ENCODE measurements at regions of chr16 and their contacts with region 1.

Region 1: GRCh38 chr16:77171745-77172635 is 19.0 kb upstream of the MON1B start:
- DNase-seq: peak; percentile 10
- H3K4me3 ChIP-seq: no peak overlapping the region
- CTCF ChIP-seq: peak; percentile 53

Region 2: DNA sequence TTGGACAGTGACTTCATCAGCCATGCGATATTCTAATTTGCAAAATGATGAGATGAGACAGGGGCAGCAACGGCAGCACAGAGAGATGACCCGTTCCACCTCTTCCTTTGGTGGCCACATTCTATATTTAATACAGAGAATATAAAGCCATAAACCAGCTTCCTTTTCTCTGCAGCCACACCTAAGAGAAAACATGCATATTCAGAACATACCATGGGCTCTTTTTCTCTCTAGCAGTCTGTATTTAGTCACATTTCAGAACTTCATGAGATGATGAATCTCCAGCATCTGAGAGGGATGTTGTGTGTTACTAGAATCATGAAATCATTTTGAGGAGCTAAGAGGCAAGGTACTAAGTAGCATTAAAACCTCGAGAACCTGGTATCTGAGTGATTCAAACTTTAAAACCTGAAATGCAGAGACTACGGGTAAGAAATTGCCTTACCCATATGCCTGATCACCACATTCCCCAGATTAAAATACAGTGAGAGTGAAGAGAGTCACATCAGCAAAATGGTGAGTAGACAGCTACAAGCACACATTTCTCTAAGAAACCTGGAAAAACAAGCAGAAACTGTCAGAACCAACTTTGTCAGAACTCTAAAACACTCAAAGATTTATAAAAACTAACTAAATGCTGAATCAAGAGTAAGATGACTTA is 1390.2 kb before region 1 on chr16:
- CTCF ChIA-PET with region 1: interaction called, 67 read pairs
- POLR2A ChIA-PET with region 1: no interaction called
- DNase-seq: no peak
- H3K4me3 ChIP-seq: no peak overlapping the region
- CTCF ChIP-seq: no peak

Region 3: DNA sequence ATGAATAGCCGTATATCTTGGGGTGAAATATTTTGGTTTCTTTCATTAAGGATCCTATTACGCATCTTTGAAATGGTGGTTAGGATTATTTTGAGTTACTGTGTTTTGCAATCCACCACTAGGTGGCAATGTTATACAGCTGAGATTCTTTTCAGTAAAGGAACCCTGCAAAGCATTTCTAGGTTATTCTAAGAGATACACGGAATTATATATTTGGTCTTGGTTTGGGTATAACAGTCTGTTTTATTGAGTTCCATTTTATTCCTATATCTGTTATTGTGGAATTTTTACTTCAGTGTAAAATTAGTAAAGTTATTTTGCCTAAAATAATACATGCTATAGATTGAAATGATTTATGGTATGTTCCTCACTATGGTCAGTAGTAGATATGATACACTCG is 1382.8 kb before region 1 on chr16:
- CTCF ChIA-PET with region 1: interaction called, 67 read pairs
- POLR2A ChIA-PET with region 1: no interaction called
- DNase-seq: peak; percentile 2
- H3K4me3 ChIP-seq: no peak overlapping the region
- CTCF ChIP-seq: peak; percentile 39

Region 4: DNA sequence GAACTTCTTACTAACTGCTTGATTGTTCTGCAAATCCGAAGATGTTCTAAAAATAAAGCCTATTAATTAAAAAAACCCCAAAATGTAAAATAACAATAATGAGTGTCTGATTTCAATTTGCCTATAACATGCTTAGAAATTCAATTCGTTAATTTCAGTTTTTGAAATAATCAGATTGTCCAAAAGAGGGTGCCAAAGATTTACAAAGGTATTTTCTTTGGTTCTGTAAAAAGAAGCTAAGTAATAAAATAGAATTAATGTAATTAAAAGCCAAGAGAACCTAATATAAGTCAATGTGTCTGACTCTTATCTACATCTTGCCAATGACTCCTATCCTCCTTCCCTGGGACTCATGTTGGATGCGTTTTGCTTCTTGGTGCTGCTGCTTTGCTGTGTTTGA is 1370.7 kb before region 1 on chr16:
- CTCF ChIA-PET with region 1: interaction called, 42 read pairs
- POLR2A ChIA-PET with region 1: no interaction called
- DNase-seq: no peak
- H3K4me3 ChIP-seq: no peak overlapping the region
- CTCF ChIP-seq: no peak

Region 5: GRCh38 chr16:77117707-77118106 is 54.3 kb before region 1 on chr16:
- CTCF ChIA-PET with region 1: no interaction called
- POLR2A ChIA-PET with region 1: no interaction called
- DNase-seq: no peak
- H3K4me3 ChIP-seq: no peak overlapping the region
- CTCF ChIP-seq: no peak

Region 6: GRCh38 chr16:77157346-77158058 is 14.5 kb before region 1 on chr16:
- CTCF ChIA-PET with region 1: interaction called, 12 read pairs
- POLR2A ChIA-PET with region 1: no interaction called
- DNase-seq: no peak
- H3K4me3 ChIP-seq: no peak overlapping the region
- CTCF ChIP-seq: no peak